ENCODE measurements at regions of chr6 and their contacts with region 1.

Region 1: GRCh38 chr6:87407901-87408720 is at the start of gene CFAP206:
- DNase-seq: peak; percentile 58 to 63
- ATAC-seq: peak; percentile 87 to 88
- H3K4me3 ChIP-seq: peak within 1 kb of the TSS; percentile 72 to 98 (median 96)
- H3K27ac ChIP-seq: peak within 1 kb of the TSS; percentile 72 to 89 (median 81)
- H3K4me1 ChIP-seq: peaks cover 3 to 9% of the 10 kb centered on the region in 2 donors
- H3K27me3 ChIP-seq: no peaks in the 10 kb centered on the region
- CTCF ChIP-seq: no peak
- POLR2A ChIP-seq: no peak
- total RNA-seq, gene CFAP206: 0.20 to 1.6 TPM in 2 of 4 donors, not detected in the others

Region 2: DNA sequence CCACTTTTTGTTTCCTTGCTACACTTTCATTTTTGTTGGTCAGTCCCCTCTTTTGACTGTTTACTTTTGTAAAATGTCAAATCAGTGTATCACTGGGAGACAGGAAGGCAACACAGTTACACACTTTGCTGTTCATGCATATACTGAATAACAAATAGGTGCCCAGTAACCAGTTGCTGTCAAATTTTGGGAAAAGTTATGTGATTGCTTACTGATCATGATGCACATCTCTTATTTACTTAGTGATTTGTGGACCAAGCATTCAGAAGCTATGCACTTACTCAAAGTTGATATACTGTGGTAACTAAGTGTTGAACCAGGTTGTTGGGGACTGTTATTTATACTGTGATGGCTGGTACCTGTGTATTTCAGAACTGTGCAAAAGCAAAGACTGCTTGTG is 211.8 kb before region 1 on chr6:
- in situ Hi-C with region 1: no loop called
- intact Hi-C with region 1: no loop called
- DNase-seq: no peak
- ATAC-seq: no peak
- H3K4me3 ChIP-seq: no peak overlapping the region
- H3K27ac ChIP-seq: no peak overlapping the region
- H3K4me1 ChIP-seq: peaks cover 23 to 24% of the 10 kb centered on the region in 2 donors
- H3K27me3 ChIP-seq: no peaks in the 10 kb centered on the region
- CTCF ChIP-seq: no peak
- POLR2A ChIP-seq: no peak

Region 3: DNA sequence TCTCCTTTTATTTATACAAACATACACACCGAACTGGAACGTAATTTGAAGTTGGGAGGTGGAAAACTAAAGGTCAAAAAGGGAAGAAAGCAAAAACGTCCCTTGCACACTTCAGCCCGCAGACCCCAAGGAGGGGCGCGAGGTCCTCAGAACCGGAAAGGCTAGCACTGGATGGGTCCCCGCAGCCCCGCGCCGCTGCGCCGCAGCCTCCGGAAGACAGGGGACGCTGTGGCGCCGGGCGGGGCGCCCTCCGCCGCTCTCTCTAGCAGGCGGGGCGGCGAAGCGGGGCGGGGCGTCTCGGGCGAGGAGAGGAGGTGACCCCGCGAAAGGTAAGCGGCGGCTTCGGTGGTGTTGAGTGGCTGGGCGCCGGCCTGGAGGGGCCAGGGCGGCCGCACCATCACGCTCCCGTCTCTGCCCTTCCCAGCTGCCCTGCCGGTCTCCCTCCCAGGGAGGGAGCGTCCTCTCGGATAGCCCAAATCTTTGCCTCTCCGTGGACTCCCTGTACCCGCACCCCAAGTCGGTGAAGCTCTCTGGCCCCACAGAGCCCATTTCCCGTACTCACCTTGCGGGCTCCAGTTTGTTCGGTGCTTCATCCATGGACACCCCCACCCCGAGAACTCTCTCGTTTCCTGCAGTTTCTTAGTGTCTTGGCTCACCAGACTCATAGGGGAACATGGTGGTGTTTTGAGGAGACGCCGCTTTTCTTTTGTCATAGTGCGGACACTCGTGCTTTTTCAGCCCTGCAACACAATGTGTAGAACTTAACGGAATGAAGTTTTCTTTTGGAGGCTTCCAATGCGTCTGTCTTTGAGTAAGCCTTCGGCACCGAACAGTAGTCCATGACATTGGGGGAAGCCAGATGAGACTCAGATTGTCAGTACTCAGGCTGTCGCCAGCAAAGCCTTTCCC is 85.6 kb before region 1 on chr6 and contains the start of gene SMIM8:
- in situ Hi-C with region 1: no loop called
- intact Hi-C with region 1: loop called (anchors 5 kb)
- DNase-seq: peak; percentile 65 to 76
- ATAC-seq: peak; percentile 95 to 97
- H3K4me3 ChIP-seq: peak within 1 kb of the TSS; percentile 81 to 98 (median 90)
- H3K27ac ChIP-seq: peak within 1 kb of the TSS; percentile 82 to 90 (median 85)
- H3K4me1 ChIP-seq: peaks cover 0 to 3% of the 10 kb centered on the region in 2 donors
- H3K27me3 ChIP-seq: no peaks in the 10 kb centered on the region
- CTCF ChIP-seq: peak; percentile 87 to 99 (median 95)
- POLR2A ChIP-seq: peak in 1 of 2 donors; percentile 14
- total RNA-seq, gene SMIM8: 2.8 to 17.7 (median 6.9) TPM